ENCODE measurements at regions of chr3 and their contacts with region 1.

Region 1: GRCh38 chr3:43001094-43001553 is 22.0 kb downstream of the GASK1A start:
- DNase-seq: peak in 1 of 2 donors; percentile 98
- H3K4me3 ChIP-seq: no peak overlapping the region
- H3K27ac ChIP-seq: peak overlapping the region; percentile 78
- H3K4me1 ChIP-seq: peaks cover 26% of the 10 kb centered on the region
- H3K27me3 ChIP-seq: no peaks in the 10 kb centered on the region
- CTCF ChIP-seq: no peak
- POLR2A ChIP-seq: no peak

Region 2: GRCh38 chr3:43432462-43432861 is 431.3 kb after region 1 on chr3:
- intact Hi-C with region 1: loop called (anchors 5 kb)
- DNase-seq: no peak
- H3K4me3 ChIP-seq: no peak overlapping the region
- H3K27ac ChIP-seq: no peak overlapping the region
- H3K4me1 ChIP-seq: peaks cover 8% of the 10 kb centered on the region
- H3K27me3 ChIP-seq: no peaks in the 10 kb centered on the region
- CTCF ChIP-seq: no peak
- POLR2A ChIP-seq: no peak